H1 (cell line): ENCODE measurements at regions of chr17 and their contacts with region 1.

Region 1: DNA sequence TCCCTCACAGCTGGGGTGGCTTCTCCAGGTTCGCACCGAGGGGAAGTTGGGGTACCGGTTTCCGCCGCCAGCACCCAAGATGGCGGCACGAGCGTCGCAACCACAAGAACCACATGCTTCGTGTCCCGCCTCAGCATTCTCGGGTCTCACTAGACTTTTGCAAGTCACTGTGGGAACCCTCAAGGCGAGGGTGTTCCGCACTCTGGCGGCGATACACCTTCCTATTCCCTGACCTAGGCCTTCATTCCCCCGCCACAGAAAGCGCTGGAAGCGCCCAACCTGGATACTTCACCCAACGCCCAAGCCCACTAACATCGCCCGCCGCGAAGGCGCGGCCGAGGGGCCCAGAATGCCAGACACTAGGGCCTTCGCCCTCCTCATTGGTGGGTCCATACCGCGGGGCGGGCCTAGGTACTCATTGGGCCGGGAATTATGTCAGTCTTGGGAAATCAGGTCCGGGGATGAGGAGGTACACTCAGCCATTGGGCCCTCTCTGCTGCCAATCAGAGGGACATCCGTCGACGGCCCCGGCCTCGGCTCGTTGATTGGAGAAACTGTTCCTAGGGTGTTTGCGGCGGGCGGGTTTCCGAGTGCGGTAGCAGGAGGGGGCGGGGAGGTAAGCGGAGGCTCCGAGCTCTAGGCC is at the start of gene NFE2L1:
- DNase-seq: peak; percentile 96
- H3K4me3 ChIP-seq: peak within 1 kb of the TSS; percentile 85 to 95 (median 89)
- H3K27ac ChIP-seq: peak within 1 kb of the TSS; percentile 97
- H3K4me1 ChIP-seq: peaks cover 8 to 29% (median 23%) of the 10 kb centered on the region in 4 experiments; a peak in 6 of 7 replicates
- H3K27me3 ChIP-seq: no peaks in the 10 kb centered on the region
- CTCF ChIP-seq: no peak
- EP300 ChIP-seq: no peak
- POLR2A ChIP-seq: peak; percentile 69 to 95
- RAD21 ChIP-seq: no peak
- total RNA-seq, gene NFE2L1: 140 and 148 TPM in 2 replicates

Region 2: DNA sequence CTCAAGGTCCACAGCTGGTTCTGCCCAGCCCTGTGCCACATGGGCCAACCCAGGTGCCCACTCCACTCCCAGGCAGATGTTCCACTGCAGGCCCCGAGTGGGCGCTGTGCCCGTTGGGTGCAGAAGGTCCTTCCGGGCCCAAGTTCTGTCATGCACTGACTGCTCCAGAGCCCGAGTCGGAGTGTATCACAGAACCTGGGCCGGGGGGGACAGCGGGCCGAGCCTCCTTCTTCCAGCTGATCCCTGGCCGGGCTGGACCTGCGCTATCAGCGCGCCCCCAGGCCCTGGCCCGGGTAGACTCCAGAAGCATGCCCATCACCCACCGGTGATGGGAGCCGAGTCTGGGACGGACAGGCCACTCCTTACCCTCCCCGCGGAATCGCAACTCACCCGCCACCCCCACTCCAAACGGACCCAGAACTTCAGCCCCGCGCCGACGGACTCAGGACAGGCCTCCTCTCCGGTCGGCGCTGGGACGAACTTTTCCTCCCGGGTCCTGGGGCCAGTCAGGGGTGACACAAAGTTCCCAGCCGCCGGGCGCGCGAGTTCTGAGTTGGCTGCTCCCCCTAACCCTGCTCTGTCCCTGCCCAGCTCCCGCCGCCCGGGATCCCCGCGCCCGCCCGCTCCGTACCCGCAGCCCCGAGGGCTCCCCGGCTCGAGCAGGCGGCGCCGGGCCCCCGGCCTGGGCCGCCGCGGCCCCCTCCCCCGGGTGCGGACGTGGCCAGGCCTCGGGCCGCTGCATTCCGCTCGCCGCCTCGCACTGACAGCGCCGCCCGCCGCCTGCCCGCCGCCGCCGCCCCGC is 10.6 kb before region 1 on chr17 and contains the start of gene COPZ2:
- CTCF ChIA-PET with region 1: interaction called, 111 read pairs
- POLR2A ChIA-PET with region 1: interaction called, 1,227 read pairs
- DNase-seq: peak in 1 of 2 experiments; percentile 73
- H3K4me3 ChIP-seq: peak within 1 kb of the TSS; percentile 36 to 65 (median 45)
- H3K27ac ChIP-seq: no peak within 1 kb of the TSS
- H3K4me1 ChIP-seq: peaks cover 2 to 7% (median 4%) of the 10 kb centered on the region in 4 experiments; a peak in 5 of 7 replicates
- H3K27me3 ChIP-seq: peaks cover 6 to 27% (median 20%) of the 10 kb centered on the region in 4 experiments
- CTCF ChIP-seq: peak; percentile 61 to 73 (median 68)
- EP300 ChIP-seq: no peak
- POLR2A ChIP-seq: no peak
- RAD21 ChIP-seq: peak; percentile 41 to 51
- total RNA-seq, gene COPZ2: not detected in 2 replicates

Region 3: GRCh38 chr17:48074315-48075081 is 26.6 kb after region 1 on chr17:
- CTCF ChIA-PET with region 1: interaction called, 203 read pairs
- POLR2A ChIA-PET with region 1: interaction called, 1,227 read pairs
- DNase-seq: peak in 1 of 2 experiments; percentile 83
- H3K4me3 ChIP-seq: no peak overlapping the region
- H3K27ac ChIP-seq: no peak overlapping the region
- H3K4me1 ChIP-seq: no peaks in the 10 kb centered on the region
- H3K27me3 ChIP-seq: no peaks in the 10 kb centered on the region
- CTCF ChIP-seq: peak in 2 of 3 experiments; percentile 75 to 77; a peak in 3 of 4 replicates
- EP300 ChIP-seq: no peak
- POLR2A ChIP-seq: no peak
- RAD21 ChIP-seq: peak; percentile 67 to 75

Region 4: GRCh38 chr17:48101012-48101720 is 53.3 kb after region 1 on chr17 and contains the start of gene CBX1:
- CTCF ChIA-PET with region 1: interaction called, 6 read pairs
- POLR2A ChIA-PET with region 1: interaction called, 112 read pairs
- DNase-seq: peak; percentile 92 to 95
- H3K4me3 ChIP-seq: peak within 1 kb of the TSS; percentile 74 to 94 (median 87)
- H3K27ac ChIP-seq: peak within 1 kb of the TSS; percentile 72; the same call in 1 of the 2 replicates
- H3K4me1 ChIP-seq: peaks cover 0 to 3% (median 0%) of the 10 kb centered on the region in 4 experiments; a peak in 1 of 7 replicates
- H3K27me3 ChIP-seq: no peaks in the 10 kb centered on the region
- CTCF ChIP-seq: 0 out of 4 replicates have a peak, but pooled peaks of 1 of the 3 experiments have one; percentile 3
- EP300 ChIP-seq: 0 out of 3 replicates have a peak, but pooled peaks of 1 of the 2 experiments have one; percentile 19
- POLR2A ChIP-seq: peak in 1 of 2 experiments; percentile 43; a peak in 2 of 3 replicates
- RAD21 ChIP-seq: no peak
- total RNA-seq, gene CBX1: 166 and 173 TPM in 2 replicates

Region 5: DNA sequence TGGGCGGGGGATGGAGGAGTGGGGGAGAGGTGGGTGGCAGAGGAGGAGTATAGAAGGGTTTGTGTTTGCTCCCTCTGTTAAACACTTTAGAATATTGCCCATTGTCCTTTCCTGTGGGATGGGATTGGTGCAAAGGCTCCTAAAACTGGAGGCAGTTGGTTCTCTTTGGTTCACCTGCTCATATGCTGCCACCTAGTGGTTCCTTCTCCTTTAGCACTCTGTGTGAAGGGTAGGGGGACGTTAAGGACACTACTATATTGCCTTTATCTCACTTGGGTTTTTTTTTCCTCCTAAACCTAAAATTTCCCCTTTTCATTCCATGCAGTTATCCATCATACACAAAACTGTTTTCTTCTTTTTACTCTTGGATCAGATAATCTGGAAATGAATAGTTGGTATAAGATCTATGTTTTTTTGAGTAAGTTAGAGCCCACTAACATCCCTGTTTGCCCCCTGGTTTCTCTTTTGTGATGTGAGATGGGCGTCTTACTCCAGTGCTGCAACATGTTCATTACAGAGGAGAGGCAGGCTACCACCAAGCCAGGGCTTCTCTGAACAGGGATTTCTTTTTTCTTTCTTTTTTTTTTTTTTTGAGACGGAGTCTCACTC is 83.5 kb after region 1 on chr17:
- CTCF ChIA-PET with region 1: interaction called, 10 read pairs
- POLR2A ChIA-PET with region 1: interaction called, 6 read pairs
- DNase-seq: peak; percentile 15 to 68
- H3K4me3 ChIP-seq: no peak overlapping the region
- H3K27ac ChIP-seq: no peak overlapping the region
- H3K4me1 ChIP-seq: no peaks in the 10 kb centered on the region
- H3K27me3 ChIP-seq: no peaks in the 10 kb centered on the region
- CTCF ChIP-seq: peak; percentile 6 to 87 (median 87)
- EP300 ChIP-seq: no peak
- POLR2A ChIP-seq: no peak
- RAD21 ChIP-seq: peak; percentile 89 to 91